ENCODE measurements at regions of chr7 and their contacts with region 1.

Region 1: GRCh38 chr7:64562626-64563275 is at the start of gene ZNF680:
- DNase-seq: peak; percentile 64 to 93 (median 88)
- ATAC-seq: peak; percentile 99
- H3K4me3 ChIP-seq: peak within 1 kb of the TSS; percentile 95
- H3K4me3 Mint-ChIP-seq: peak within 1 kb of the TSS; percentile 93 to 100 (median 99)
- H3K27ac ChIP-seq: peak within 1 kb of the TSS; percentile 67
- H3K27ac Mint-ChIP-seq: peak within 1 kb of the TSS; percentile 89 to 98 (median 97)
- H3K4me1 ChIP-seq: no peaks in the 10 kb centered on the region
- H3K4me1 Mint-ChIP-seq: peaks cover 14 to 41% (median 35%) of the 10 kb centered on the region in 7 donors
- H3K27me3 ChIP-seq: no peaks in the 10 kb centered on the region
- H3K27me3 Mint-ChIP-seq: no peaks in the 10 kb centered on the region
- total RNA-seq, gene ZNF680: 10.0 to 20.4 (median 12.0) TPM

Region 2: GRCh38 chr7:63900394-63901203 is 662.2 kb before region 1 on chr7:
- CTCF ChIA-PET with region 1: no interaction called
- POLR2A ChIA-PET with region 1: interaction called, 5 read pairs
- intact Hi-C with region 1: loop called in 1 of 2 experiments (anchors 1 kb)
- DNase-seq: peak; percentile 64 to 95 (median 91)
- ATAC-seq: peak; percentile 97
- H3K4me3 ChIP-seq: peak overlapping the region; percentile 84
- H3K4me3 Mint-ChIP-seq: peak overlapping the region; percentile 82 to 100 (median 98)
- H3K27ac ChIP-seq: peak overlapping the region; percentile 89
- H3K27ac Mint-ChIP-seq: peak overlapping the region; percentile 88 to 99 (median 95)
- H3K4me1 ChIP-seq: no peaks in the 10 kb centered on the region
- H3K4me1 Mint-ChIP-seq: peaks cover 0 to 22% (median 9%) of the 10 kb centered on the region in 7 donors
- H3K27me3 ChIP-seq: no peaks in the 10 kb centered on the region
- H3K27me3 Mint-ChIP-seq: peaks cover 0 to 4% (median 0%) of the 10 kb centered on the region in 5 donors

Region 3: DNA sequence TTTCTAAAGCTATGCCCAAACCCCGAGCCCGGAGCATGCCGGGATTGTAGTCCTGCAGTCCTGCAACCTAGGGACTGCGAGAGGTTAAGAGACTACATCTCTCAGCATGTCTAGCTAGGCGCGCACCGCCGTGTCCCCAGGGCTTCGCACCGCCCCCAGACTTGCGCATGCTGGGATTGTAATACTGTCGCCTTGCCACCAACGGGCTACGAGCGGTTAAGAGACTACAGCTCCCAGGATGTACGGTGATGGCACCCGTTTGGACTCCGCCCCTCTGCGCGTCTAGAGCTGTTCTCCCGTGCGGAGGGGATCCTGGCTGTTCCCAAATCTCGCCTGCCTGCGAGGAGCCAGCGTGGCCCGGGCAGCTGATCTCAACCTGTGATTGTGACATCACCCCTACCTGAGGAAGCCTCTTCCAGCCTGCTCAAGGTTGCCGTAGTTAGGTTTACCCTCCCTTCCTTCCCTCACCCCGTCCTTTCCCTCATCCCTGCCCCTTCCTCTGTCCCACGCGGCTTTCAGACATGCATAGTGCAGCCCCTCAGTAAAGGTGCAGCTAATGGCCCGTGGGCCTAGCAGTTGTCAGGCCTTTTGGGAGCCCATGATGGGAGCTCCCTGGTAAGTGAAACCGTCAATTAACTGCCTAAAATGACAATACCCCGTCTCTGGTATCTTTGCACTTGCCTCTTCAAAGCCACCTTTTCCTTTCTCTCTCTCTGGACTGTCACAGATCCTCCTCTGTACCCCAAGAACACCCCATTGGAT is 255.3 kb before region 1 on chr7:
- CTCF ChIA-PET with region 1: interaction called, 3 read pairs
- POLR2A ChIA-PET with region 1: interaction called, 10 read pairs
- intact Hi-C with region 1: loop called (anchors 1 kb)
- DNase-seq: peak; percentile 76 to 95 (median 93)
- ATAC-seq: peak; percentile 99
- H3K4me3 ChIP-seq: peak overlapping the region; percentile 95
- H3K4me3 Mint-ChIP-seq: peak overlapping the region; percentile 90 to 100 (median 96)
- H3K27ac ChIP-seq: peak overlapping the region; percentile 83
- H3K27ac Mint-ChIP-seq: peak overlapping the region; percentile 94 to 99 (median 97)
- H3K4me1 ChIP-seq: peaks cover 0 to 13% of the 10 kb centered on the region in 2 donors
- H3K4me1 Mint-ChIP-seq: peaks cover 13 to 30% (median 19%) of the 10 kb centered on the region in 7 donors
- H3K27me3 ChIP-seq: no peaks in the 10 kb centered on the region
- H3K27me3 Mint-ChIP-seq: no peaks in the 10 kb centered on the region

Region 4: DNA sequence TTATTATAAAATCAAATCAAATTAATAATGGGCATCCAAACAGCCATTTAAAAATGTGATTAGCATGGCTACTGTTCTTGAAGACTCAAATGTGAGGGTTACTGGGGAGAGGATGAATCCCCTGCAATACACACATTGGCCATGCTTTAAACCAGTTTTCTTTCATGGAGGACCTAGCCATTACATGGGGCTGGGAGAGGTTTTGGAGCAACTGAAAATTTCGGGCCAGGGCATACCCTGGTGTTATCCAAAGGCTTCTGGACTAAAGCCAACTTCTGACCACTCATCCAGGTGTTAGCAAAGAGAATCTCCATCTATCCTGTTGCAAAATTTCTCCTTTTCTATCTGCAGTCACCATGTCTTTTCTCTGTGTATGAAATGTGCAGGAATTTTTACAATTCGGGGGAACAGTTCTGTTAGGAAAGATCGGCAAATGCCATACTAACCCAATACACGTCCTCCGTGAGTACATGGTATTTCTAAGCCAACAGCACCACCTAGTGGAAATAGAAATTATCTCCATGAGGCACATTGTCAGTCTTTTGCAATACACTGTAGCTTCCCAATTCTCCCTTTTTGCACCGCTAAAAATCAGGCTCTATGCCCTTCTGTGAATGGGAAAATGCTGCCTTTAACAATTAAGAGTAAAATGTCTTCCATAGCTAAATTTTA is 56.2 kb after region 1 on chr7:
- CTCF ChIA-PET with region 1: no interaction called
- POLR2A ChIA-PET with region 1: no interaction called
- intact Hi-C with region 1: loop called in 1 of 2 experiments (anchors 2 kb)
- DNase-seq: peak in 7 of 9 donors; percentile 5 to 60 (median 40)
- ATAC-seq: no peak
- H3K4me3 ChIP-seq: no peak overlapping the region
- H3K4me3 Mint-ChIP-seq: peak overlapping the region in 1 of 10 donors; percentile 1
- H3K27ac ChIP-seq: no peak overlapping the region
- H3K27ac Mint-ChIP-seq: no peak overlapping the region
- H3K4me1 ChIP-seq: no peaks in the 10 kb centered on the region
- H3K4me1 Mint-ChIP-seq: peaks cover 0 to 4% (median 0%) of the 10 kb centered on the region in 7 donors
- H3K27me3 ChIP-seq: no peaks in the 10 kb centered on the region
- H3K27me3 Mint-ChIP-seq: no peaks in the 10 kb centered on the region

Region 5: GRCh38 chr7:65006094-65006992 is 443.6 kb after region 1 on chr7 and contains the start of gene ERV3-1:
- CTCF ChIA-PET with region 1: no interaction called
- POLR2A ChIA-PET with region 1: interaction called, 4 read pairs
- intact Hi-C with region 1: loop called (anchors 1 to 2 kb)
- DNase-seq: peak; percentile 76 to 96 (median 93)
- ATAC-seq: peak; percentile 99
- H3K4me3 ChIP-seq: peak within 1 kb of the TSS; percentile 72
- H3K4me3 Mint-ChIP-seq: peak within 1 kb of the TSS; percentile 75 to 96 (median 94)
- H3K27ac ChIP-seq: peak within 1 kb of the TSS; percentile 81
- H3K27ac Mint-ChIP-seq: peak within 1 kb of the TSS; percentile 73 to 98 (median 94)
- H3K4me1 ChIP-seq: peaks cover 4 to 21% of the 10 kb centered on the region in 2 donors
- H3K4me1 Mint-ChIP-seq: peaks cover 26 to 57% (median 45%) of the 10 kb centered on the region in 7 donors
- H3K27me3 ChIP-seq: no peaks in the 10 kb centered on the region
- H3K27me3 Mint-ChIP-seq: no peaks in the 10 kb centered on the region
- total RNA-seq, gene ERV3-1: 12.2 to 22.9 (median 14.9) TPM

Measured in naive thymus-derived CD4-positive, alpha-beta T cell (primary cell).